ENCODE measurements at regions of chr9 and their contacts with region 1.

Region 1: DNA sequence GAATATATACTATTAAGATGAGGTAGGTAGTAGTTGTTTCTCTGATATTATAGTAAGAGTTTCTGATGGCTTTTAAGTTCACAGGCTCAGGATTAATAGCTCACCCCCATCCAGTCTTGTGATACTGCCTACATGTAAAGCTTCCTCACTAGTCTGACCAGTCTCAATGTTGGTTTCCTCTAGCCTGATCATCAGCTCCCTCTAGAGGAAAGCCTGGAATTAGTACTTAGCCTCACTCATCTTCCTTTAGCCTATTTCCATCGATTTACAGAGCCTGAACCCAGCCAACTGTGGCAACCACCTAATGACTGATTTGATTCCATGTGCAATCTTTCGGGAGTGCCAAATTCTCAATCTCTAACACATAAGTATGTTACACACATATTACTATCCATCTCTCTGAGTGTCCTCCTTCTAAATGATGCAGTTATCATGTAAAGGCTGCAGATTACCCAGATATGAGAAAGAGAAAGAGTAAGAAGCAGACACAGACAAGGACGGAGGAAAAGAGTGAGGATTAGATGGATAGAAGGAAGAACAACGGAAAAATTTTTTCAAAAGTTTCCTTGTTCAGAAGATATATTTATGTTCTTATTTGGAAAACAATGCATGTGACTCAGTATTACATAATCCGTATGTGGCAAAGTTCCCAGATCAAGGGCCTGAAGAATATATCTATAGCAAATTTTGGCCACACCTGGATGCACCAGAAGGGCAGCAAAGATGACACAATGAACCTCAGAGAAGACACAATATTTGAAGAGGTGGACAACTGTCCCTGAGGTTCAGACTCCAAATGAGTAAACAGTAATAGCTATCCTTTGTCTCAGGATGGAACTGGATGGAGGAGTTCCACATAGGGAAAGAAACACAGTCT is 333.7 kb downstream of the ELAVL2 start:
- DNase-seq: peak; percentile 58
- H3K4me3 Mint-ChIP-seq: no peak overlapping the region
- H3K27ac Mint-ChIP-seq: no peak overlapping the region
- H3K4me1 Mint-ChIP-seq: no peaks in the 10 kb centered on the region
- H3K27me3 Mint-ChIP-seq: peaks cover 19% of the 10 kb centered on the region
- CTCF ChIP-seq: peak; percentile 37

Region 2: GRCh38 chr9:22469928-22470544 is 1022.3 kb before region 1 on chr9:
- CTCF ChIA-PET with region 1: no interaction called
- POLR2A ChIA-PET with region 1: no interaction called
- intact Hi-C with region 1: loop called (anchors 2 kb)
- DNase-seq: peak; percentile 44
- H3K4me3 Mint-ChIP-seq: no peak overlapping the region
- H3K27ac Mint-ChIP-seq: no peak overlapping the region
- H3K4me1 Mint-ChIP-seq: no peaks in the 10 kb centered on the region
- H3K27me3 Mint-ChIP-seq: no peaks in the 10 kb centered on the region
- CTCF ChIP-seq: peak; percentile 44

Region 3: GRCh38 chr9:23123048-23123632 is 369.2 kb before region 1 on chr9:
- CTCF ChIA-PET with region 1: interaction called, 3 read pairs
- POLR2A ChIA-PET with region 1: no interaction called
- intact Hi-C with region 1: loop called (anchors 1 kb)
- DNase-seq: peak; percentile 27
- H3K4me3 Mint-ChIP-seq: no peak overlapping the region
- H3K27ac Mint-ChIP-seq: no peak overlapping the region
- H3K4me1 Mint-ChIP-seq: no peaks in the 10 kb centered on the region
- H3K27me3 Mint-ChIP-seq: peaks cover 23% of the 10 kb centered on the region
- CTCF ChIP-seq: peak; percentile 37

Region 4: DNA sequence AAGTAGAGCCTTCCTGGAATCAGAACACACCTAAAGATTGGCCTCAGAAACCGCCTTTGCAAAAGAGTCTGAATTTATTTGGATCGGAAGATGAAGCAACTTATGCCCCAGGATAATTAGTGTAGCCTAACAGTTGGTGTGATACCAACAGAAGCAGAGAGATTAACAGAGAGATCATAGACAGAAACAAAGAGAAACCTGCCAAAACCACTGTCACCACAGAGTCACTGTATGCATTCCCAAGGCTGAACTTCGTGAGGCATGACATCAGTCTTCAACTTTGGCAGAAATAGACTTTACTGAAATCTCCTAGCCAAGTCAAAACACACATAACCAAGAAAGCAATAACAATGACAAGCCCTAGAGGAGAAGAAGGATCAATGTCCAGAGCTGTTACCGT is 28.1 kb before region 1 on chr9:
- CTCF ChIA-PET with region 1: no interaction called
- POLR2A ChIA-PET with region 1: no interaction called
- intact Hi-C with region 1: no loop called
- DNase-seq: no peak
- H3K4me3 Mint-ChIP-seq: no peak overlapping the region
- H3K27ac Mint-ChIP-seq: no peak overlapping the region
- H3K4me1 Mint-ChIP-seq: no peaks in the 10 kb centered on the region
- H3K27me3 Mint-ChIP-seq: peaks cover 72% of the 10 kb centered on the region
- CTCF ChIP-seq: no peak